Naive thymus-derived CD4-positive, alpha-beta T cell (primary cell): ENCODE measurements at regions of chr6 and their contacts with region 1.

Region 1: GRCh38 chr6:142926494-142927270 is 18.3 kb downstream of the HIVEP2 start:
- DNase-seq: peak; percentile 62 to 87 (median 84)
- ATAC-seq: peak; percentile 88
- H3K4me3 ChIP-seq: peak overlapping the region; percentile 87
- H3K4me3 Mint-ChIP-seq: peak overlapping the region; percentile 88 to 99 (median 96)
- H3K27ac ChIP-seq: peak overlapping the region; percentile 100
- H3K27ac Mint-ChIP-seq: peak overlapping the region; percentile 93 to 100 (median 100)
- H3K4me1 ChIP-seq: peaks cover 35 to 40% of the 10 kb centered on the region in 2 donors
- H3K4me1 Mint-ChIP-seq: peaks cover 20 to 75% (median 68%) of the 10 kb centered on the region in 7 donors
- H3K27me3 ChIP-seq: no peaks in the 10 kb centered on the region
- H3K27me3 Mint-ChIP-seq: no peaks in the 10 kb centered on the region

Region 2: DNA sequence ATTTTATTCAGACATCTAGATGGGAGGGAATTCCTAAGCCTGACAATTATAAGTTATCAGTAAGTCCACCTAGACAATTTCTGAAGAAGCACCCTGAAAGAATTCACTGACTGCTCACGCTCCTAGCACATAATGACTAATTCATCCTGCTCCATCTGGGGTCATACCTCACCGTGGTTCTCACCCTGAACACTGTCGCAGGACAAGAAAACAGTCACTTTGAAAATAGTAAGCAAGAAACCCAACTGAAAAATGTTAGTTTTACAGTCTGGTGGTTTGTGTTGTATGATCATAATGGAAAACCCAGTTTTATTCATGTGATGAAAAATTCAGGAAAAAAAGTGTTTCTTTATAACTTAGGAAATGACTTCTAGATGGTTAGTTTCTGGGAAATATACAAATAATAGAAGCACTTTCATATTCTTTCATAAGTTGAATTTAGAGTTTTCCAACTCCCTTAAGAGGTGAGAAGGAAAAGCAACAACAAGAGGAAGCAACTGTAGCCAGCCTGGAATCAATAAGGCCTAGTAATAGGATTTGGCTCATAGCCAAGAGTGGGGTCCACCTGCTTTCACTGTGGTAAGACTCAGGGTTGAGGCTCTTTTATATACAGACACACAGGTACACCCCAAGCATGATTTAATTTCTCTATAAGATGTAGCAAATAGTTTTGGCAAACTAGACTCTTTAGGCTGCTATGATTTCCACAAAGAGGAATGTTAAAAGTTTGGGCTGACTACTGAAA is 75.8 kb before region 1 on chr6:
- CTCF ChIA-PET with region 1: interaction called, 3 read pairs
- POLR2A ChIA-PET with region 1: interaction called, 113 read pairs
- intact Hi-C with region 1: loop called in 1 of 2 experiments (anchors 5 kb)
- DNase-seq: peak in 1 of 9 donors; percentile 39
- ATAC-seq: peak; percentile 36
- H3K4me3 ChIP-seq: peak overlapping the region; percentile 32
- H3K4me3 Mint-ChIP-seq: peak overlapping the region; percentile 58 to 78 (median 72)
- H3K27ac ChIP-seq: peak overlapping the region; percentile 66
- H3K27ac Mint-ChIP-seq: peak overlapping the region; percentile 76 to 100 (median 91)
- H3K4me1 ChIP-seq: peaks cover 94 to 95% of the 10 kb centered on the region in 2 donors
- H3K4me1 Mint-ChIP-seq: peaks cover 47 to 100% (median 97%) of the 10 kb centered on the region in 7 donors
- H3K27me3 ChIP-seq: no peaks in the 10 kb centered on the region
- H3K27me3 Mint-ChIP-seq: no peaks in the 10 kb centered on the region

Region 3: DNA sequence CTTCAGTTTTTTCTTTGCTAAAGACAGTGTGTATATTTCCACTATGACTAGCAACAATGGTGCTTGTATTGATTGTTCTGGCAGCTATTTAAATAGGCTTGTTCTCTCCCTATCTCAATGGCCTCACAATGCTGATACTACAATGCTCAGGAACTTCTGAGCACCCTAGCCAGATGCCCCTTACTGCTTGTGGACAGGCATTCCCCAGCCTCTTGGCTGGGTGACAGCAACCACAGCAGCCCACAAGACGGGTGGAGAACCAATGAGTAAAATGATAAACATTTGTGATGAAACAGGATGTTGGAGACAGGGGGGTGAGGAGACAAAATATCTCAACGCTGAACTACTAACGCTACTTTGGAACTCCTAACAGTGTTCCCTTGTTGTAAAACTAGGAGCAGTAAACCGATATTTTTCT is 24.0 kb before region 1 on chr6:
- CTCF ChIA-PET with region 1: interaction called, 4 read pairs
- POLR2A ChIA-PET with region 1: interaction called, 109 read pairs
- intact Hi-C with region 1: loop called (anchors 1 kb)
- DNase-seq: peak; percentile 60 to 89 (median 84)
- ATAC-seq: peak; percentile 84
- H3K4me3 ChIP-seq: peak overlapping the region; percentile 26
- H3K4me3 Mint-ChIP-seq: peak overlapping the region in 7 of 10 donors; percentile 77 to 88 (median 83)
- H3K27ac ChIP-seq: peak overlapping the region; percentile 88
- H3K27ac Mint-ChIP-seq: peak overlapping the region in 1 of 9 donors; percentile 95
- H3K4me1 ChIP-seq: peaks cover 48 to 71% of the 10 kb centered on the region in 2 donors
- H3K4me1 Mint-ChIP-seq: peaks cover 13 to 64% (median 41%) of the 10 kb centered on the region in 7 donors
- H3K27me3 ChIP-seq: no peaks in the 10 kb centered on the region
- H3K27me3 Mint-ChIP-seq: no peaks in the 10 kb centered on the region